Dendritic cell treated with granulocyte-macrophage colony-stimulating factor and Interleukin-4, amounts not matched to agents 40 ng/mL and 50 ng/mL, for 4 days (primary cell): ENCODE measurements at regions of chr4 and their contacts with region 1.

Region 1: GRCh38 chr4:26459054-26459755 is 31.1 kb downstream of the CCKAR start:
- H3K4me3 Mint-ChIP-seq: no peak overlapping the region
- H3K27ac Mint-ChIP-seq: no peak overlapping the region
- H3K4me1 Mint-ChIP-seq: peaks cover 5% of the 10 kb centered on the region
- H3K27me3 Mint-ChIP-seq: peaks cover 2% of the 10 kb centered on the region

Region 2: DNA sequence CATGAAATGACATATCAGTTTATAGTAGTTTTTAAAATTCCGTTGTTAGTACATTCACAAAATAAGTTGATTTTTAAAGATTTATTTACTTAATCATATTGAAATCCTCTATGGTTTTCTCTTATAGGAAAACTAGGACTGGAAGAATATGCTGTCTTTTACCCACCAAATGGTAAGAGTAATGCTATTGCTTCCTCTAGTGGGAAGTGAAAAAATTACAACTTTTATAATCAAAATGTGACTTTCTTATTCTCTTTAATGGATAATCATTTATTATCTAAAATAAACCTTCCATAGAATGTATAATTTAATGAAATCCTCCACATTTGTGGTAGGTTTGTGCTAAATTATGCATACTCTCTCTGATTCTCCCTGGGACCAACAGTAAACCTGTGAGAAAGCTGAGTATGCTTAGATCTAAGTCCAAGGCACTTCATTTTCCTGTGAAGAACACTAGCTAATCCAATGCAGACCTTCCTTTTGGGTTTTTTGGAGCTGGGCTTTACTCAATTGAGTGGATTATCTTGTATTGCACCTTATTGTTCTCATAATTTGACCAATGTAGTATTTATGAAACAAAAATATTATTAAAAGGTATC is 260.8 kb after region 1 on chr4:
- intact Hi-C with region 1: loop called (anchors 2 kb)
- H3K4me3 Mint-ChIP-seq: no peak overlapping the region
- H3K27ac Mint-ChIP-seq: no peak overlapping the region
- H3K4me1 Mint-ChIP-seq: peaks cover 17% of the 10 kb centered on the region
- H3K27me3 Mint-ChIP-seq: no peaks in the 10 kb centered on the region

Region 3: GRCh38 chr4:27568236-27568951 is 1109.2 kb after region 1 on chr4:
- intact Hi-C with region 1: no loop called
- H3K4me3 Mint-ChIP-seq: no peak overlapping the region
- H3K27ac Mint-ChIP-seq: no peak overlapping the region
- H3K4me1 Mint-ChIP-seq: no peaks in the 10 kb centered on the region
- H3K27me3 Mint-ChIP-seq: no peaks in the 10 kb centered on the region